Activated CD4-positive, alpha-beta memory T cell treated with anti-CD3 and anti-CD28 coated beads, Interleukin-2, amount 10 ng/mL, durations not matched to agents 7 days and 5 days (primary cell): ENCODE measurements at regions of chr3 and their contacts with region 1.

Region 1: DNA sequence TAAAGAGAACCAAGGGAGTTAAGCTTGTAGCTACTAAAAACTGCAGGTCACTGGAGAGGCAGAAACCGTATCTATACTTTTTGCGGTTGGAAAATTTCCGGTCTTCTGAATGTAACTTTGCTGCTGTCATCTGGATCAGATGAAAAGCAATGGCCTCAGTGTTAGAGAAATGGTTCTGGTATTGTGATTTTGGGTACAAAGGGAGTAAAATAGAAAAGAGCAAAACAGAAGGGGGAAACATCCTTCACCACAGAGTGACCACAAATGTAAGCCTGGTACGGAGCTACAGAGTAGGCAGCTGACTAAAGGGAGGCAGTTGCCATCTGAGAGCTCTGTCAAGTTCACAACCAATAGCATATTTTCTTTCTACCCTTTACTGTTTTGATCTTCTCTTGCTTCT is 5.6 kb downstream of the CD96 start:
- DNase-seq: peak; percentile 63
- H3K4me3 Mint-ChIP-seq: no peak overlapping the region
- H3K27ac Mint-ChIP-seq: no peak overlapping the region
- H3K4me1 Mint-ChIP-seq: peaks cover 29% of the 10 kb centered on the region
- H3K27me3 Mint-ChIP-seq: no peaks in the 10 kb centered on the region

Region 2: DNA sequence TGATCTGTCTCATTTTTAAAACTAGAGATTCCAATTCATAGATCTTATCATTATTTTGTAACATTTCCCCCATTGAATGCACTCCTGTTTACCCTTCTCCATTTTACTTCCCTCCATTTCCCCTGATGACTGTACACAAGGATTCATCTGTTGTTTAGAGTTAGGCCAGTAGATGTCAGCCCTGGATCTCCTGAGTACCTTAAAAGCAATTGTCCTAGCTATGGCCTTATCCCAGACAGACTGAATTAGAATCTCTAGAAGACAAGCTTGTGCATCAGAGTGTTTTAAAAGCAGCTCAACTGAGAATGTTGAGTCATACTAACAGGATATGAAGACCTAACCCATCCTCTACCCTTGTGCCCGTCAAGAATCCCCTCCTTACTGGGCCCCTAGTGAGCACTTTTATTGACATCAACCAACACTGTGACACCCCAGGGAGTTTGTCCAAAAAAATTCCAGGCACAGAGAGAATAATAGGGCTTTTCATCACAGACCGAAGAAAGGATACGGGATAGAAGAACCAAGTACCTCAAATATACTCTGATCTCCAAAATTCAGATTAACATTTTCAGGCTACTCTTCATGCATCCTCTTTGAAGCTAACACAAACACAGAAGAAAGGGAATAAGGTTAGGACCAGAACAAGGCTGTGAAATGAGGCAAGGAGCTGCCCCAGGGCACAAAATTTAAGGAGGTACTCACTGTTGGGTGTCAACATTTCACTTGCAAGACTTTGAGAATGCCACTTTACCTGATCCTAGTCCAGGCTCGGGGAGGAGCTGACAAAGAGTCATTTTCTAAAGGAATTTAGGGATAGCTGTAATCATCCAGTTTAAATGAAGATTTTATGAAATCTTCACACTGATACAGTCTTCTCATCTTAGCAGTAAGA is 30.4 kb after region 1 on chr3:
- CTCF ChIA-PET with region 1: interaction called, 9 read pairs
- POLR2A ChIA-PET with region 1: interaction called, 12 read pairs
- DNase-seq: no peak
- H3K4me3 Mint-ChIP-seq: no peak overlapping the region
- H3K27ac Mint-ChIP-seq: peak overlapping the region; percentile 68
- H3K4me1 Mint-ChIP-seq: peaks cover 67% of the 10 kb centered on the region
- H3K27me3 Mint-ChIP-seq: no peaks in the 10 kb centered on the region

Region 3: GRCh38 chr3:111594205-111594604 is 46.6 kb after region 1 on chr3:
- CTCF ChIA-PET with region 1: interaction called, 4 read pairs
- POLR2A ChIA-PET with region 1: interaction called, 23 read pairs
- DNase-seq: no peak
- H3K4me3 Mint-ChIP-seq: peak overlapping the region; percentile 71
- H3K27ac Mint-ChIP-seq: peak overlapping the region; percentile 85
- H3K4me1 Mint-ChIP-seq: peaks cover 86% of the 10 kb centered on the region
- H3K27me3 Mint-ChIP-seq: no peaks in the 10 kb centered on the region

Region 4: DNA sequence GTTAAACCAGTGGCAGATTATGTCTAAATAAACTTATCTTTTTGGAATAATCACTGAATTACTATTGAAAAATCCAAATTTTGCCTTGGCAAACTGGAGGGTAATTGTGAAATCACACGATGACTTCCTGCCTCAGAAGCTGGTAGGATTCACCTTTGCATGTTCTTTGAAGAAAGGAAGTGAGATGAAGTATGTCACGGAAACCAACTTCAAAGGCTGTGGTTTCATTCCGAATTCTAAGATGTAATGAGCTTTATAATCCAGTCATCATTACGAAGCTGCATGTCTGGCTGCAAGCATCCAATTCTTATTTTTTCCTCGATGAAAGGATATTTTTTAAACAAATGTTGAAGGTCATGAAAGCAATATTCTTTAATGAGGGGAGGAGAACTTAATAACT is 62.6 kb after region 1 on chr3:
- CTCF ChIA-PET with region 1: interaction called, 8 read pairs
- POLR2A ChIA-PET with region 1: interaction called, 75 read pairs
- DNase-seq: peak; percentile 45
- H3K4me3 Mint-ChIP-seq: peak overlapping the region; percentile 45
- H3K27ac Mint-ChIP-seq: peak overlapping the region; percentile 95
- H3K4me1 Mint-ChIP-seq: peaks cover 95% of the 10 kb centered on the region
- H3K27me3 Mint-ChIP-seq: no peaks in the 10 kb centered on the region